Colonic mucosa (tissue), 4 donors: ENCODE measurements at regions of chr14 and their contacts with region 1.

Region 1: GRCh38 chr14:31084385-31084784 is 58.2 kb upstream of the STRN3 start:
- DNase-seq: no peak
- H3K4me3 ChIP-seq: no peak overlapping the region
- H3K27ac ChIP-seq: no peak overlapping the region
- H3K4me1 ChIP-seq: no peaks in the 10 kb centered on the region
- H3K27me3 ChIP-seq: no peaks in the 10 kb centered on the region
- CTCF ChIP-seq: no peak

Region 2: DNA sequence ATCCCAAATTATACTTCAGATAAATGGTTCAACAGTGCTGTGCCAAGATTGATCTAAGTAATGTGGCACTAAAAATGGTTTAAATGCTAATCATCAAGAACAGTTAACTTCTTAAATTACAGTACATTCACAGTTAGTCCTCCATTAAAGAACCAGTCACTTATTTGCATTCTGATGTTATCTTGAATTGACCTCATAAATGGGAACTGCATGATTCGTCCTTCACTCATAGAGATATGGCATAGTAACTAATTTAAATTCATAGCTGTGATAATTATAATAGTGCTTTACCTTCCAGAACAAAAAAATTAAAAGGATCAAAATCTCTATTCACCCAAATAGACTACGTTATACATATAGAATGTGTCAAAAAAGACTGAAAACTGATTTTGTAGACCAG is 148.9 kb before region 1 on chr14:
- intact Hi-C with region 1: no loop called
- DNase-seq: no peak
- H3K4me3 ChIP-seq: no peak overlapping the region
- H3K27ac ChIP-seq: no peak overlapping the region
- H3K4me1 ChIP-seq: no peaks in the 10 kb centered on the region
- H3K27me3 ChIP-seq: no peaks in the 10 kb centered on the region
- CTCF ChIP-seq: no peak

Region 3: DNA sequence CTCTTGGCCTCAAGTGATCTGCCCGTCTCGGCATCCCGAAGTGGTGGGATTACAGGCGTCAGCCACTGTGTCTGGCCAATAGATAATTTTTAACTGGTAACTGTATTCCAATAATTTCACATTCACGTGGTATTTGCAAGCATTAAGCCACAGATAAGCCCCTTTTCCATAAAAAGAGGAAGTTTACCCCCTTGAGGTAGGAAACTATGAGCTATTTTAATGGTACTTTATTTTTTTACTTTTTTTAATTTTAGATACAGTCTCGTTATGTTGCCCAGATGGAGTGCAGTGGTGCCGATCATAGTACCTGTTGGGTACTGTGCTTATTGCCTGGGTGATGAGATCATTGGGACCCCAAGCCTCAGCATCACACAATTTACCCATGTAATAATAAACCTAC is 101.9 kb before region 1 on chr14:
- intact Hi-C with region 1: loop called (anchors 5 kb)
- DNase-seq: no peak
- H3K4me3 ChIP-seq: no peak overlapping the region
- H3K27ac ChIP-seq: no peak overlapping the region
- H3K4me1 ChIP-seq: no peaks in the 10 kb centered on the region
- H3K27me3 ChIP-seq: no peaks in the 10 kb centered on the region
- CTCF ChIP-seq: no peak

Region 4: DNA sequence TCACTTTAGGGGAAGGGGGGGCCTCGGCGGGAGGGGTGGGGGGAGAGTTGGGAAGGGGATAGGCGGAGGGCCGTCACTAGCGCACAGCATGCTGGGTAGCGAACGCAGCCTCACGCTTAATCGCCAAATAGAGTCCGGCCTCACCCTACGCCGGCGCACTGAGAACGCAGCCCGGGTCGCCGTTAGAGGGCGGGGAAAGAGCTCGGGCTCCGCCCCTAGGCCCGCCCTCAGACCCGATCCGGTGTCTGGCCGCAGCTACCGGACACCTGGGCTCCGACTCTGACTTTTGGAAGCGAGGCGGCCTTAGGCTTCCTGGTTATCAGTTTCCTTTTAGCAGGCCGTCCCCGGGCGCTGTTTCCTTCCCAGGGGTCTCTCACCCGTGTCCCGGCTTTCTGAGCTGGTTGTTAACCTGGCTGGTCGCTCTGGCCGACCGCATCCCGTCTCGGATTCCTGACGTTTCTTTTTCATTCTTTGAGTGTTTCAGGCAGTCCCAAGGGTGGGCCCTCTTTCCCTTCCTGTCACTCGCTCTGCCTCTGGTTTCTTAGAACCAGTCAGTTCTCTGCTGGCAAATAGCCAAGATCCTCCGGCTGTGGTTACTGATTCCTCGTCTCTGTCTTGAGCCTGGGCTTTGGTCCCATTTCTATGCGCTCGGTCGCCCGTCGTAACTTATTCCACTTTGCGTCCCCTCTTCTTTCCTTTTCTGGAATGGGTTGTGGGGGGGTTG is 57.8 kb before region 1 on chr14:
- intact Hi-C with region 1: no loop called
- DNase-seq: peak; percentile 97
- H3K4me3 ChIP-seq: peak overlapping the region; percentile 96
- H3K27ac ChIP-seq: peak overlapping the region; percentile 95
- H3K4me1 ChIP-seq: peaks cover 11% of the 10 kb centered on the region
- H3K27me3 ChIP-seq: no peaks in the 10 kb centered on the region
- CTCF ChIP-seq: no peak